ENCODE measurements at regions of chr9 and their contacts with region 1.

Region 1: DNA sequence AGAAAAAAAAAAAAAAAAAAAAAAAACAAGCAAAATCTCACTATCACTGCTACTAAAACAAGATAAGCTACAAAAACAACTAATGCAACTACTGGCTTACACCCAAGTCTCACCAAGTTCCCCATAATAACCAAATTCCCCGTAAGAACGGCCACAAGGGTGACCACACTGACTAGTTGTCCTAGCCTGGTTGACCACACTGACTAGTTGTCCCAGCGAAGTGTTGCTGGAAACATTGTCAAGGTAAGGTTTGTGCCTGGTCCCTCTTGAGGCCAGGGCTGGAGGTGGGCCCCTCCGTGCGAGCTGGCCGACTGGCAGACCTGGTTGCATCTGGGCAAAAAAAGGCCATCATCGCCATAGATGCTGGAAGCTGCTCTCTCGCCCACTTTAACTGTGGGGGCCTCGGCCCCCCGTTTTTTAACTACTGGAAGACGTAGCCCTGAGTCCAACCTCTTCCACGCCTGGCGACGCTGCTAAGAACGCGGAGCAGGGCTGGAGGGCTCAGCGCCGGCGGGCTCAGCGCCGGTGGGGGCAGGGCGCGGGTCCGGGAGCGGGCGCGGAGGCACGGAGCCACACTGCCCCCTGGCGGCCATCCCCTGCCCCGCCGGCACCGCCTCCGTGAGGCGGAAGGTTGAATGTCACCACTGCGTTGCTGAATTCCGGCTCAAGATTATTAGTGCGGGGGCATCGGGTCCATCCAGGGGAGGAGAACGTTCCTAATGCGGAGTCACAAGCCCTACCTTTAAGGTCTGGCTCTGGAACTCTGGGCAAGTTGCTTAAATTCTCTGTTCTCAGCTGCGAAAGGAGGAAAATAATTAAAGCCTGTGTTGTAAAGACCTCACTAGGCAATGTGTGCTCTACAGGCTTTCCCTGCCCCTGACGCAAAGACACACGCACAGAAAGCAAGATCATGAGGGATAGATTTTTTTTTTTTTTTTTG is 84.0 kb downstream of the HSD17B3 start:
- DNase-seq: no peak
- H3K4me3 ChIP-seq: peak overlapping the region; percentile 33
- H3K27me3 ChIP-seq: peaks cover 5% of the 10 kb centered on the region
- CTCF ChIP-seq: peak; percentile 82

Region 2: DNA sequence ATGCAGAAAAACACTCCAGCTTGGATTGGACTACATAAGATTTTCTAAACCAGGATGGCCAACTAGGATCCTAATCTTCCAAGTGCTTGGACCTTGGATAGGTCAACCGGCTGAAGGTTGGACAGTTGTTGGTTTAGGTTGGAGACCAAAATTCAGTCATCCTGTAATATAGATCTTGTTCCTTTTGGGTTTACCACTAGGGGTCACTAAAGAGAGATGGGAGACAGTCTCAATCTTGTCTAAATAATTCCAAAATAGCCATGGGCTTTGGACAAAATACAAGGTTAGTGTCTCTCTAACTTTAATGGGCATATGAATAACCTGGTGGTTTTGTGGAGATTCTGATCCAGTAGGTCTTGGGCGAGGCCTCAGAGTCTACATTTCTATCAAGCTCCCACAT is 491.3 kb before region 1 on chr9:
- CTCF ChIA-PET with region 1: interaction called, 28 read pairs
- POLR2A ChIA-PET with region 1: no interaction called
- DNase-seq: no peak
- H3K4me3 ChIP-seq: no peak overlapping the region
- H3K27me3 ChIP-seq: no peaks in the 10 kb centered on the region; the same call in 1 of the 2 replicates
- CTCF ChIP-seq: peak; percentile 79

Measured in BJ (cell line).